WTC11 (cell line): ENCODE measurements at regions of chr5 and their contacts with region 1.

Region 1: DNA sequence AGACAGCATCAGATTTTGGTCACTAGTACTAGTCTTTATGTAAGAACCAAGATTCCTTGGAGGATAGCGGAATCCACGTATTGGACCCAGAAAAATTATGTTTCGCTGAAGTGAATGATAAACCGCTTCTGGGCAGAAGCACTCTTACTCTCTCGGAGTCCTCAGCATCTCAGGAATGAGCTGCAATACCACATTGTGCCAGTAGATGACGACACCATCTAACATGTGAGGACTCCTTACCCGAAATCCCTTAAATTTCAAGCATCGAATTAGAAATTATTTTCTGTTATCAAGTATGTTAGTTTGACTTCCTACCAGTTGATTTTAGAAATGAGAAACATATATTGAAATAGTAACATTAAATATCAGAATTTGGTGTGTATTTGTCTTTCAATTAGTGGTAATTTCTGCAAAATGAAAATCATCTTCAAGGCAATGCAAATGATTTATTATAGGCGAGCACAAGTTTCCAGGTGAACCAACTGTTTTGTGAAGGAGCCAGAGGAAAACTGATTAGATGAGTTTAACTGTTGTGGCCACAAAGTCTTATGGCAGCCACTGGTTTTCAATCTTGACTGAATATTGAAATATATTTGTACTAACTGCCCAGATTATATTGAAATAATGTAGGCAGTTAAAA is 66.0 kb upstream of the CAMK4 start:
- DNase-seq: peak; percentile 81
- ATAC-seq: peak; percentile 83
- H3K4me3 Mint-ChIP-seq: no peak overlapping the region
- H3K27ac Mint-ChIP-seq: no peak overlapping the region
- H3K4me1 Mint-ChIP-seq: no peaks in the 10 kb centered on the region
- H3K27me3 Mint-ChIP-seq: no peaks in the 10 kb centered on the region
- CTCF ChIP-seq: peak; percentile 99

Region 2: GRCh38 chr5:111169269-111169668 is 11.0 kb after region 1 on chr5:
- CTCF ChIA-PET with region 1: interaction called, 10 read pairs
- POLR2A ChIA-PET with region 1: no interaction called
- DNase-seq: no peak
- ATAC-seq: peak; percentile 56
- H3K4me3 Mint-ChIP-seq: no peak overlapping the region
- H3K27ac Mint-ChIP-seq: no peak overlapping the region
- H3K4me1 Mint-ChIP-seq: peaks cover 31% of the 10 kb centered on the region
- H3K27me3 Mint-ChIP-seq: no peaks in the 10 kb centered on the region
- CTCF ChIP-seq: no peak

Region 3: DNA sequence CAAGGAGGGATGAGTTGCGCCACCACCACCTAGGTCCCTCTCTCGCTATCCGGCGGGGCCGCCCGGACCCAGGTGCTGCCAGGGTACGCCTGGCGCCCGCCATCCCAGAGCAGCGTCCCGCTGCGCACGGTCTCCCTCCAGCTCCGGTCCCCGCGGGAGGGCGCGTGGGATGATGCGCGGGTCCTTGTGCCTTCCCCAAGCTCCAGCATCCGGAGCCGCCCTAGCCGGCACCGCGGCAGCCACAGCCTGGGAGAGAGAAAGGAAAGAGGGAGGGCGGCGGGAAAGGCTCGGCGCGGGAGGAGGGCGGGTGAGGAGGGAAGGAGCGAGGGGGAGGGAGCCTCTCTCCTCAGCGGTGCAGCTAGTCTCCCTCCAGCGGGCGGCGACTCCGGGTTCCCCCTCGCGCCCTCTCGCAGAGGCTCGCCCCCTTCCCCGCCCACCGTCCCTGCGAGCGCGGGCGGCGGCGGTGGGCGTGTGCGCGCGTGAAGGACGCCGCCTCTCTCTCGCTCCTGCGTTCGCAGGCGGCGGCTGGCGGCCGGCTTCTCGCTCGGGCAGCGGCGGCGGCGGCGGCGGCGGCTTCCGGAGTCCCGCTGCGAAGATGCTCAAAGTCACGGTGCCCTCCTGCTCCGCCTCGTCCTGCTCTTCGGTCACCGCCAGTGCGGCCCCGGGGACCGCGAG is 65.8 kb after region 1 on chr5 and contains the start of gene CAMK4:
- CTCF ChIA-PET with region 1: interaction called, 14 read pairs
- POLR2A ChIA-PET with region 1: no interaction called
- DNase-seq: peak; percentile 80
- ATAC-seq: peak; percentile 87
- H3K4me3 Mint-ChIP-seq: peak within 1 kb of the TSS; percentile 82
- H3K27ac Mint-ChIP-seq: no peak within 1 kb of the TSS
- H3K4me1 Mint-ChIP-seq: peaks cover 47% of the 10 kb centered on the region
- H3K27me3 Mint-ChIP-seq: peaks cover 31% of the 10 kb centered on the region
- CTCF ChIP-seq: no peak
- total RNA-seq, gene CAMK4: 5.8 to 10.6 TPM (median 7.4 TPM) in 3 replicates

Region 4: GRCh38 chr5:111278845-111279504 is 120.8 kb after region 1 on chr5:
- CTCF ChIA-PET with region 1: interaction called, 51 read pairs
- POLR2A ChIA-PET with region 1: no interaction called
- DNase-seq: peak; percentile 88
- ATAC-seq: peak; percentile 100
- H3K4me3 Mint-ChIP-seq: no peak overlapping the region
- H3K27ac Mint-ChIP-seq: no peak overlapping the region
- H3K4me1 Mint-ChIP-seq: peaks cover 2% of the 10 kb centered on the region; the same call in 1 of the 2 replicates
- H3K27me3 Mint-ChIP-seq: no peaks in the 10 kb centered on the region
- CTCF ChIP-seq: peak; percentile 85